ENCODE measurements at regions of chr7 and their contacts with region 1.

Region 1: DNA sequence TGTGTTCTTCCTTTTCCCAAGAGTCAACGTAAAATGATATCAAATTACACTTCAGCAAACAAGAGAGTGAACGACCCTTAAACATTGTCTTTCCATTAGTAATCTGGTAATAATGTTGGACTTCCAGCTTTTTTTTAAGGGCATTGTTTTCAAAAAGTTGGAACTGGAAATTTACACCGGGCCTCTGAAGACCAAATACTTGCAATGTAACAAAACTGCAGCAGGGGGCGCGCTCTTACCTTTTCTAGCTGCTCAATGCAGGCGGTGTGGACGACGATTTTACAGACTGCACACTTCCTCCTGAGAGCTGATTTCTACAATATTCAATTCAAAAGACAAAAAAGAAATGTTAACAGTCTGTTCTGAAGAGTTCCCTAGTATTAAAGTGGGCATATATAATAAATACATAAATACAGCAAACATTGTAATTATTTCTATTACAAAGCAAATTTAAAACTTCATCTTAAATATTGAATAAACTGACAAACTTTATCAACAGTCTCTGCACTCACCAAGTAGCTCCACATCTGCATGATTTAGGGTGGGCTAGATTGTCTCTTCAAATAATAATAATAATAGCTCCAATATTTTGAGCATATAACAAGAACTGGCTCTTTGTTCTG is 190.4 kb downstream of the DGKI start:
- DNase-seq: peak; percentile 10 to 89
- H3K4me3 ChIP-seq: no peak overlapping the region
- H3K27ac ChIP-seq: no peak overlapping the region
- H3K4me1 ChIP-seq: peaks cover 0 to 14% (median 12%) of the 10 kb centered on the region in 4 experiments; a peak in 5 of 7 replicates
- H3K27me3 ChIP-seq: no peaks in the 10 kb centered on the region
- CTCF ChIP-seq: peak; percentile 67 to 78 (median 73)
- EP300 ChIP-seq: no peak
- POLR2A ChIP-seq: no peak
- RAD21 ChIP-seq: peak; percentile 88 to 93

Region 2: DNA sequence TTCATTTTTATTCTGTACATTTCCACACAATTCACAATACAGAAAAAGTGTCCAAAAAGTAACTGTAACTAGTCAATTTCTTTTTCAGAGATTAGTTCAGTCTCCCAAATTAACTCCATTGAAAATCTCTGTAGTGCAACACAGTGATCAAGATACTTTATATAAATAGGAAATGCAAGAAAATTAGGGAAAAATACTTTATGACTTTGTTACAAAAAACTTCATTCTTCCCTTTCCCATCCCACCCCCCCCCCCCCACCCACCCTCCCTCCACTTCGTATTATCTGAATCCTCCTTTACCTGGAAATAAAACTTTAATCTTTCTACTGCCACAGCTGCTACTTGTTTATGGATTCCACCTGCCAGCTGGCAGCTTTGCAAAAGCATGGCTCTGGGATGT is 275.3 kb before region 1 on chr7:
- CTCF ChIA-PET with region 1: no interaction called
- POLR2A ChIA-PET with region 1: no interaction called
- DNase-seq: no peak
- H3K4me3 ChIP-seq: no peak overlapping the region
- H3K27ac ChIP-seq: no peak overlapping the region
- H3K4me1 ChIP-seq: no peaks in the 10 kb centered on the region
- H3K27me3 ChIP-seq: no peaks in the 10 kb centered on the region
- CTCF ChIP-seq: no peak
- EP300 ChIP-seq: no peak
- POLR2A ChIP-seq: no peak
- RAD21 ChIP-seq: no peak

Region 3: DNA sequence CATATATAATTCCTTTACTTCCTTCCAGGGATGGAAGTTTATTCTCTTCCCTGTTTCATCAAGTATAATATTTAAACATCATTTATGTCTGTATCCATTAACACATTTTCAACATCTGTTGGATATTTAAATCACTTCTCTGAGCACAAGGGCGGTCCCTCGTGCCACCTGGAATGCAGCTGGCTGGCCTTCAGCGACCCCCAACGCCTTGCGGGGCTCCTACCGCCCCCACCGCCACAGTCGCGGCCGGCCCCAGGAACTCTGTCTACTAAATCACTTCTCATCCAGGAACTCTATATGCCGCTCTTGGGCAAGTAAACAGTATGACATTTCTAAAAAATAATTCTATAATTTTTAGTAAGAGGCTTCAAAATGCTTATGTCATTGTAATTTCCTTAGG is 91.7 kb before region 1 on chr7:
- CTCF ChIA-PET with region 1: no interaction called
- POLR2A ChIA-PET with region 1: no interaction called
- DNase-seq: peak in 1 of 2 experiments; percentile 9
- H3K4me3 ChIP-seq: peak overlapping the region in 1 of 4 experiments; percentile 31; a peak in 1 of 8 replicates
- H3K27ac ChIP-seq: no peak overlapping the region
- H3K4me1 ChIP-seq: no peaks in the 10 kb centered on the region
- H3K27me3 ChIP-seq: no peaks in the 10 kb centered on the region
- CTCF ChIP-seq: no peak
- EP300 ChIP-seq: no peak
- POLR2A ChIP-seq: no peak
- RAD21 ChIP-seq: peak; percentile 16 to 36; a peak in 2 of 4 replicates

Region 4: DNA sequence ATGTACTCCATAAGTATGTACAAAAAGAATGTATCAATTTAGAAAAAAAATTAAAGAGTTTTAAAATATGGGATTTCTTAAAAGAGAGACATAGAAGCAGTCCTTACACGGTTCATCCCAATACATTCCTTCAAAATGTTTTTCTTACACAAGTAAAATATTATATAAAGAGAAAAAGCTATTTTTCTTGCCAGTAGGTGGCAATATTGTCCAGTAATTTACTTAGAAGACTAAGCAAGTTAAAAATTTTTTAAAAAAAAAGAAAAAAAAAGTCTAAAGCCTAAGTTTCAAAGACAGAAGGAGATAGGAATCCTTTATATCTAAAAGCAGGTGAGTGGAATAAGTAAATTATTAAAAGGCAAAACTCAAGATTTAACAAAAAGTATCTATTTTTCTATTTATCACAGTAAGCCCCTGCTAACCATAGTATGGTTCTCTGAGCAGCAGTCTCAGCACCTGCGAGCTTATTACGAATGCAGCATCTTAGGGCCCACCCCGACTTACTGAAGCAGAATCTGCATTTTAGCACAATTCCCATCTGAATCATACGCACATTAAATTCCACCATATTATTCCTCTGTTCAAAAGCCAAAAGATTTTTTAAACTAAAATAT is 50.2 kb before region 1 on chr7:
- CTCF ChIA-PET with region 1: interaction called, 11 read pairs
- POLR2A ChIA-PET with region 1: no interaction called
- DNase-seq: no peak
- H3K4me3 ChIP-seq: no peak overlapping the region
- H3K27ac ChIP-seq: no peak overlapping the region
- H3K4me1 ChIP-seq: no peaks in the 10 kb centered on the region; a peak in 1 of 7 replicates
- H3K27me3 ChIP-seq: no peaks in the 10 kb centered on the region
- CTCF ChIP-seq: no peak; a peak in 1 of 4 replicates
- EP300 ChIP-seq: no peak
- POLR2A ChIP-seq: no peak
- RAD21 ChIP-seq: peak in 1 of 2 experiments; percentile 31; a peak in 2 of 4 replicates

Region 5: GRCh38 chr7:137642472-137642871 is 13.9 kb before region 1 on chr7:
- CTCF ChIA-PET with region 1: interaction called, 13 read pairs
- POLR2A ChIA-PET with region 1: no interaction called
- DNase-seq: no peak
- H3K4me3 ChIP-seq: no peak overlapping the region
- H3K27ac ChIP-seq: no peak overlapping the region
- H3K4me1 ChIP-seq: peaks cover 0 to 3% (median 0%) of the 10 kb centered on the region in 4 experiments; a peak in 2 of 7 replicates
- H3K27me3 ChIP-seq: no peaks in the 10 kb centered on the region
- CTCF ChIP-seq: no peak
- EP300 ChIP-seq: no peak
- POLR2A ChIP-seq: no peak
- RAD21 ChIP-seq: no peak

Region 6: GRCh38 chr7:137731436-137731835 is 75.1 kb after region 1 on chr7:
- CTCF ChIA-PET with region 1: interaction called, 10 read pairs
- POLR2A ChIA-PET with region 1: no interaction called
- DNase-seq: no peak
- H3K4me3 ChIP-seq: no peak overlapping the region
- H3K27ac ChIP-seq: no peak overlapping the region
- H3K4me1 ChIP-seq: no peaks in the 10 kb centered on the region
- H3K27me3 ChIP-seq: no peaks in the 10 kb centered on the region; a peak in 1 of 7 replicates
- CTCF ChIP-seq: no peak
- EP300 ChIP-seq: no peak
- POLR2A ChIP-seq: no peak
- RAD21 ChIP-seq: no peak

Region 7: DNA sequence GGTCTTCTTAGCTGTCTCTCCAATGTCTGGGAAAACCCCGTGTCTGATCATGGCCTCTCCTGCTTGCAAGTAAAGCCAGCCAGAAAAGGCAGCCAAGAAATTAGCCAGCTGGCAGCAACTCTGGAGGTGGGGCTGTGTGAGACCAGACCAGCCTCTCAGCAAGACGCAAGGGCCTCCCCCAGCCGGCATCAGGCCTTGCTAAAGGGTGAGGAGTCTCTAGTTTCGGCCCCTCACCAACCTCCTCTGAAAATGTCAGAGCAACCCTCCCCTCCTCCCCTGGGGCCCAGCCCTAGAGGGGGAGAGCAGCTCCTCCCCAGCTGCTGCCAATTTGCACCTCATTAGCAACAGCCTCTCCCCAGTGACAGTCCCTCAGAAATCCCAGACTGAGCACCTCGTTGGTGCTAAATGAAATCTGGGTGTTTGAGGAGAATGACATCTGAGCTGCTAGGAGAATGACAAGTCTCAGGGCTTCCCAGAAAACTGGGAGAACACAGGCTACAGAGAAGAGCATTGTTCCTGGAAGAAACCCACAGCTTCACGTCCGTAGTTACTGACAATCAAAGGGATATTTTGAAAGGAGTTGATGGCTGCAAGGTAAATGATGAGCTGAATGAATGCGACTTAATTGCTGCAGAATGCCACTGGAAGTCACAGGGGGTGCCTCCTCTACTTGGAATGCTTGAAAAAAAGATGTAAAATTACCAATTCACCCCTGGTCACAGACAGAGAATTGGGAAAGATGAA is 164.5 kb after region 1 on chr7:
- CTCF ChIA-PET with region 1: interaction called, 36 read pairs
- POLR2A ChIA-PET with region 1: no interaction called
- DNase-seq: peak in 1 of 2 experiments; percentile 59
- H3K4me3 ChIP-seq: peak overlapping the region in 2 of 4 experiments; percentile 7 to 14; a peak in 4 of 8 replicates
- H3K27ac ChIP-seq: no peak overlapping the region
- H3K4me1 ChIP-seq: peaks cover 7 to 15% (median 10%) of the 10 kb centered on the region in 4 experiments
- H3K27me3 ChIP-seq: no peaks in the 10 kb centered on the region
- CTCF ChIP-seq: no peak
- EP300 ChIP-seq: no peak
- POLR2A ChIP-seq: no peak
- RAD21 ChIP-seq: no peak

Region 8: GRCh38 chr7:137862964-137863363 is 206.6 kb after region 1 on chr7:
- CTCF ChIA-PET with region 1: interaction called, 10 read pairs
- POLR2A ChIA-PET with region 1: no interaction called
- DNase-seq: no peak
- H3K4me3 ChIP-seq: no peak overlapping the region
- H3K27ac ChIP-seq: no peak overlapping the region
- H3K4me1 ChIP-seq: peaks cover 0 to 3% (median 0%) of the 10 kb centered on the region in 4 experiments; a peak in 1 of 7 replicates
- H3K27me3 ChIP-seq: no peaks in the 10 kb centered on the region
- CTCF ChIP-seq: no peak
- EP300 ChIP-seq: no peak
- POLR2A ChIP-seq: no peak
- RAD21 ChIP-seq: no peak

Region 9: GRCh38 chr7:137888241-137888640 is 231.9 kb after region 1 on chr7:
- CTCF ChIA-PET with region 1: interaction called, 37 read pairs
- POLR2A ChIA-PET with region 1: no interaction called
- DNase-seq: no peak
- H3K4me3 ChIP-seq: no peak overlapping the region
- H3K27ac ChIP-seq: no peak overlapping the region
- H3K4me1 ChIP-seq: peaks cover 0 to 12% (median 6%) of the 10 kb centered on the region in 4 experiments; a peak in 3 of 7 replicates
- H3K27me3 ChIP-seq: no peaks in the 10 kb centered on the region
- CTCF ChIP-seq: no peak
- EP300 ChIP-seq: no peak
- POLR2A ChIP-seq: no peak
- RAD21 ChIP-seq: no peak

Measured in H1 (cell line).